PC-9 (cell line): ENCODE measurements at regions of chr16 and their contacts with region 1.

Region 1: GRCh38 chr16:56700195-56700594 is 17.9 kb downstream of the MT1X start:
- DNase-seq: no peak
- H3K4me3 ChIP-seq: no peak overlapping the region
- H3K27ac ChIP-seq: no peak overlapping the region
- H3K4me1 ChIP-seq: peaks cover 13% of the 10 kb centered on the region
- H3K27me3 ChIP-seq: no peaks in the 10 kb centered on the region
- CTCF ChIP-seq: no peak

Region 2: GRCh38 chr16:56470240-56470639 is 230.0 kb before region 1 on chr16:
- CTCF ChIA-PET with region 1: no interaction called
- POLR2A ChIA-PET with region 1: interaction called, 11 read pairs
- intact Hi-C with region 1: no loop called
- DNase-seq: peak in 1 of 2 experiments; percentile 92
- H3K4me3 ChIP-seq: no peak overlapping the region
- H3K27ac ChIP-seq: peak overlapping the region; percentile 65
- H3K4me1 ChIP-seq: peaks cover 26% of the 10 kb centered on the region
- H3K27me3 ChIP-seq: no peaks in the 10 kb centered on the region
- CTCF ChIP-seq: no peak

Region 3: DNA sequence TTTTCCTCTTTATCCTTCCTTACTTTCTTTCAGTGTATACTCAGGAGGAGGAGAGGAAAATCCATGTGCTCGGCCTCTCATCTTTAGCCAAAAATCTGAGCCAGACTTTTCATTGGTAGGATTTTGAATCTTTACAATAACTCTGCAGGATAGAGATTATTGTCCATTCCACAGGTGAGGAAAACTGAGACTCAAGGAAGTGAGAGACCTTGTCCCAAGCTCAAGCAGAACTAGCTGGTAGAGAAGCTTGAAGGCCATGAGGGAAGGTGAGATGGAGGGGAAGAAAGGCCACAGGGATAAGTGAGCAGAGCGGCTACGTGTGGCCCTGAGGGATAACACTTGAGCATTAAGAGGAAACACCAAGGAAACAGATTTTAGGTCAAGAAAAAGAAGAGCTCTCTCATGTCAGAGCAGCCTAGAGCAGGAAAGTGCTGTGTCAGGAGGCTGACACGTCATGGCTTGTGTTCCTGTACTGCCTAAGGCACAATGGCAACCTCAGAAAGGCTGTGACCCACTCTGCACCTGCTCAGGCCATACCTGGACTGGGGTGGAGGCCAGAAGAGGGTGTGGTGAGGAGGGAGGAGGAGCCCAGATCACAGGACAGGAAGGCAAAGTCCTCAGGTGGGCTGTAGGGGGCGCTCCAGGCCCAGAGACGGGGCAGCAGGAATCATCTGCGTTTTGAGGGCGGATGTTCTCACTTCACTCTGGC is 123.5 kb before region 1 on chr16:
- CTCF ChIA-PET with region 1: interaction called, 27 read pairs
- POLR2A ChIA-PET with region 1: interaction called, 3 read pairs
- intact Hi-C with region 1: loop called (anchors 1 kb)
- DNase-seq: peak; percentile 92 to 95
- H3K4me3 ChIP-seq: no peak overlapping the region
- H3K27ac ChIP-seq: peak overlapping the region; percentile 75
- H3K4me1 ChIP-seq: peaks cover 14% of the 10 kb centered on the region
- H3K27me3 ChIP-seq: no peaks in the 10 kb centered on the region
- CTCF ChIP-seq: peak; percentile 91

Region 4: GRCh38 chr16:56608043-56608875 is 91.9 kb before region 1 on chr16 and contains the start of gene MT2A:
- CTCF ChIA-PET with region 1: interaction called, 14 read pairs
- POLR2A ChIA-PET with region 1: interaction called, 11 read pairs
- intact Hi-C with region 1: loop called (anchors 1 kb)
- DNase-seq: peak; percentile 89 to 91
- H3K4me3 ChIP-seq: peak within 1 kb of the TSS; percentile 90
- H3K27ac ChIP-seq: peak within 1 kb of the TSS; percentile 95
- H3K4me1 ChIP-seq: peaks cover 88% of the 10 kb centered on the region
- H3K27me3 ChIP-seq: no peaks in the 10 kb centered on the region
- CTCF ChIP-seq: no peak
- total RNA-seq, gene MT2A: 203 and 353 TPM in 2 replicates

Region 5: GRCh38 chr16:56657555-56658326 is 42.5 kb before region 1 on chr16 and contains the start of gene MT1F:
- CTCF ChIA-PET with region 1: no interaction called
- POLR2A ChIA-PET with region 1: interaction called, 11 read pairs
- intact Hi-C with region 1: no loop called
- DNase-seq: peak; percentile 81 to 83
- H3K4me3 ChIP-seq: peak within 1 kb of the TSS; percentile 55
- H3K27ac ChIP-seq: no peak within 1 kb of the TSS
- H3K4me1 ChIP-seq: peaks cover 19% of the 10 kb centered on the region
- H3K27me3 ChIP-seq: peaks cover 11% of the 10 kb centered on the region
- CTCF ChIP-seq: no peak
- total RNA-seq, gene MT1F: 4.0 and 10.3 TPM in 2 replicates

Region 6: GRCh38 chr16:56684256-56684925 is 15.8 kb before region 1 on chr16:
- CTCF ChIA-PET with region 1: no interaction called
- POLR2A ChIA-PET with region 1: no interaction called
- intact Hi-C with region 1: no loop called
- DNase-seq: no peak
- H3K4me3 ChIP-seq: no peak overlapping the region
- H3K27ac ChIP-seq: no peak overlapping the region
- H3K4me1 ChIP-seq: peaks cover 45% of the 10 kb centered on the region
- H3K27me3 ChIP-seq: no peaks in the 10 kb centered on the region
- CTCF ChIP-seq: no peak